Vagina (tissue), 2 donors: ENCODE measurements at regions of chr22 and their contacts with region 1.

Region 1: GRCh38 chr22:27668828-27669797 is 132.4 kb downstream of the MN1 start:
- DNase-seq: no peak
- H3K4me3 ChIP-seq: no peak overlapping the region
- H3K27ac ChIP-seq: no peak overlapping the region
- H3K4me1 ChIP-seq: peaks cover 29% of the 10 kb centered on the region
- H3K27me3 ChIP-seq: no peaks in the 10 kb centered on the region
- CTCF ChIP-seq: no peak
- POLR2A ChIP-seq: no peak

Region 2: GRCh38 chr22:27799334-27800249 is 130.5 kb after region 1 on chr22:
- intact Hi-C with region 1: loop called (anchors 10 kb)
- DNase-seq: no peak
- H3K4me3 ChIP-seq: peak overlapping the region; percentile 55 to 72
- H3K27ac ChIP-seq: peak overlapping the region; percentile 86
- H3K4me1 ChIP-seq: peaks cover 61% of the 10 kb centered on the region
- H3K27me3 ChIP-seq: no peaks in the 10 kb centered on the region
- CTCF ChIP-seq: no peak
- POLR2A ChIP-seq: no peak